GM12878 (cell line): ENCODE measurements at regions of chr12 and their contacts with region 1.

Region 1: GRCh38 chr12:53159195-53159839 is 21.2 kb upstream of the ZNF740 start:
- DNase-seq: peak; percentile 72
- ATAC-seq: peak; percentile 99
- H3K4me3 ChIP-seq: no peak overlapping the region
- H3K27ac ChIP-seq: no peak overlapping the region
- H3K4me1 ChIP-seq: no peaks in the 10 kb centered on the region; the same call in 1 of the 2 replicates
- H3K27me3 ChIP-seq: no peaks in the 10 kb centered on the region
- CTCF ChIP-seq: peak; percentile 97 to 100 (median 99)
- EP300 ChIP-seq: no peak
- POLR2A ChIP-seq: no peak
- RAD21 ChIP-seq: peak; percentile 99

Region 2: GRCh38 chr12:53180220-53180930 is 21.1 kb after region 1 on chr12 and contains the starts of genes CSAD and ZNF740:
- CTCF ChIA-PET with region 1: interaction called, 89 read pairs
- POLR2A ChIA-PET with region 1: interaction called, 26 read pairs
- RAD21 ChIA-PET with region 1: interaction called, 36 read pairs
- SMC1A ChIA-PET with region 1: interaction called, 39 read pairs
- in situ Hi-C with region 1: no loop called
- intact Hi-C with region 1: loop called (anchors 2 kb)
- DNase-seq: peak; percentile 91
- ATAC-seq: peak; percentile 96
- H3K4me3 ChIP-seq: peak within 1 kb of the TSS; percentile 78
- H3K27ac ChIP-seq: peak within 1 kb of the TSS; percentile 91
- H3K4me1 ChIP-seq: peaks cover 13% of the 10 kb centered on the region; the same call in 1 of the 2 replicates
- H3K27me3 ChIP-seq: no peaks in the 10 kb centered on the region
- CTCF ChIP-seq: peak in 2 of 3 experiments; percentile 2 to 12; a peak in 1 of 6 replicates
- EP300 ChIP-seq: no peak
- POLR2A ChIP-seq: peak; percentile 81
- RAD21 ChIP-seq: no peak
- polyA plus RNA-seq, gene CSAD: 1.2 to 2.0 TPM
- polyA plus RNA-seq, gene ZNF740: 1.4 to 1.8 TPM

Region 3: DNA sequence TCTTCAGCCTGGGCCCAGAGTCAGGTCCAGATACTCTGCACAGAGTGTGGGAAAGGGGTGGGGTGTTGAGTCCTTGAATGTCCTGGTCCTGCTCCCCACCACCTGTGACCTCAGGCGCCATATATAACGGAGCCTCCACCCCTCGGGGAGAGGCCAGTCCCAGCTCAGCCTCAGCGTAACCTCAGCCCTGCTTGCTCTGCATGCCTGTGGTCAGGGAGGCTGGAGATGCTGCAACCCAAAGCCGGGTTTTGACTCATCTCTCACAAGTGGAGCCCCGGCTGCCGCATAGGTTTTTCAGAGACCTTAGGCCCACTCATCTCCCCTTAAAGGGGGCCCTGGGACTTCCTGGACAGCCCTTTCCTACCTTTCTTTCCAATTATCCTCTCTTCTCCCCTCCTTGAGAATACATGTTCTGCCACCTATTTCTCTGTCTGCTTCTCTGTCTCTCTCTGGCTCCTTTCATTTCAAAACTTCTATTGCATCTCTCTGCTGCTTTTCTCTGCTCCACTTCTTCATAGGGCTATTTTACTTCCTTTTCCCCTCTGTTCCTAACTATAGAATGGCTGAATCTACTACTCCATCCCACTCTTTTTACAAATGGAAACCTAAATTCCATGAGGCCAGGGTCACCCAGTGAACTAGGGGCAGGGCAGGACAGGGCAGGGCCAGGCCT is 46.6 kb after region 1 on chr12:
- CTCF ChIA-PET with region 1: interaction called, 188 read pairs
- POLR2A ChIA-PET with region 1: interaction called, 7 read pairs
- RAD21 ChIA-PET with region 1: interaction called, 58 read pairs
- SMC1A ChIA-PET with region 1: interaction called, 62 read pairs
- in situ Hi-C with region 1: no loop called
- intact Hi-C with region 1: loop called (anchors 2 kb)
- DNase-seq: peak; percentile 87
- ATAC-seq: peak; percentile 80
- H3K4me3 ChIP-seq: peak overlapping the region; percentile 90
- H3K27ac ChIP-seq: peak overlapping the region; percentile 86
- H3K4me1 ChIP-seq: peaks cover 54% of the 10 kb centered on the region
- H3K27me3 ChIP-seq: no peaks in the 10 kb centered on the region
- CTCF ChIP-seq: no peak
- EP300 ChIP-seq: peak; percentile 60 to 77; a peak in 2 of 4 replicates
- POLR2A ChIP-seq: peak; percentile 75
- RAD21 ChIP-seq: no peak

Region 4: DNA sequence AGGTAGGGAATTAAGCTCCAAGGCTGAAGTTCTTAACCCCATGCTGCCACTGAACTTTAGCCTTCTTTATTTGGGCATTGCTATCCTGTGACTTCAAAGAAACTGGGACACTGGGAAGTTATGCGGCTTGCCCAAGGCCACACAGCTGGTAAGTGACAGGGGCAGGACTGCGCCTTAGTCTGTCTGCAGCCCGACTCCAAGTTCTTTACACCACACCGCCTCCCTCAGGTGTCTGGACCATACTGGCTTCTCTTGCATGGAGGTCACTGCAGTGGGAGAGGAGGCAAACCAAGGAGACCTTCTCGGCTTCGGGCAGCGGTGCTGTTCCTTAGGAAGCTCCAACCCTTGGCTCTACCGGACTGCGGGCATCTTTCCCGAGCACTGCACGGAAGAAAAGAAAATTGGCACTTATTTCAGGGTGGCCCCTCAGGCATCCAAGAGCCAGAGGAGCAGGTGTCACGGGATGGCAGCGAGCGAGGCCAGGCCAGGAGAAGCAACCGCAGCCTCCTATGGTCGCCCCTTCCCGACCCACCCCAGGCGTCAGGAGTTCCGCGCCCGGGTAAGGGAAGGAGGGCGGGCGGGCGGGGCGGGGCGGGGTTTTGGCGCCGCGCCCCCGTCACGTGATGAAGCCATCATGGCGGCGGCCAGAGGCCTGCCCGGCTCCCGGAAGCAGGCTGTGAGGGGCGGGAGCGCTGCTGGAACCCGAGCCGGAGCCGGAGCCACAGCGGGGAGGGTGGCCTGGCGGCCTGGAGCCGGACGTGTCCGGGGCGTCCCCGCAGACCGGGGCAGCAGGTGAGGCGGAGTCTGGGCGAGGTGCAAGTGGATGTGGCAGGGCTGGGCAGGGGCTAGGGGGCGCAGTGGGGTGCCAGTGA is 92.4 kb after region 1 on chr12:
- CTCF ChIA-PET with region 1: interaction called, 33 read pairs
- POLR2A ChIA-PET with region 1: no interaction called
- RAD21 ChIA-PET with region 1: interaction called, 18 read pairs
- SMC1A ChIA-PET with region 1: interaction called, 11 read pairs
- in situ Hi-C with region 1: no loop called
- intact Hi-C with region 1: no loop called
- DNase-seq: peak; percentile 24
- ATAC-seq: peak; percentile 92
- H3K4me3 ChIP-seq: peak overlapping the region; percentile 99
- H3K27ac ChIP-seq: peak overlapping the region; percentile 66
- H3K4me1 ChIP-seq: peaks cover 28% of the 10 kb centered on the region
- H3K27me3 ChIP-seq: no peaks in the 10 kb centered on the region
- CTCF ChIP-seq: peak; percentile 52 to 83 (median 64); a peak in 5 of 6 replicates
- EP300 ChIP-seq: no peak
- POLR2A ChIP-seq: peak; percentile 92
- RAD21 ChIP-seq: peak; percentile 83

Region 5: GRCh38 chr12:53287741-53288216 is 128.5 kb after region 1 on chr12:
- CTCF ChIA-PET with region 1: interaction called, 144 read pairs
- POLR2A ChIA-PET with region 1: interaction called, 3 read pairs
- RAD21 ChIA-PET with region 1: interaction called, 34 read pairs
- SMC1A ChIA-PET with region 1: interaction called, 35 read pairs
- in situ Hi-C with region 1: loop called (anchors 5 kb)
- intact Hi-C with region 1: loop called (anchors 1 kb)
- DNase-seq: peak; percentile 17
- ATAC-seq: peak; percentile 99
- H3K4me3 ChIP-seq: no peak overlapping the region
- H3K27ac ChIP-seq: no peak overlapping the region
- H3K4me1 ChIP-seq: no peaks in the 10 kb centered on the region
- H3K27me3 ChIP-seq: no peaks in the 10 kb centered on the region
- CTCF ChIP-seq: peak; percentile 76 to 80 (median 78)
- EP300 ChIP-seq: no peak
- POLR2A ChIP-seq: no peak
- RAD21 ChIP-seq: peak; percentile 84

Region 6: DNA sequence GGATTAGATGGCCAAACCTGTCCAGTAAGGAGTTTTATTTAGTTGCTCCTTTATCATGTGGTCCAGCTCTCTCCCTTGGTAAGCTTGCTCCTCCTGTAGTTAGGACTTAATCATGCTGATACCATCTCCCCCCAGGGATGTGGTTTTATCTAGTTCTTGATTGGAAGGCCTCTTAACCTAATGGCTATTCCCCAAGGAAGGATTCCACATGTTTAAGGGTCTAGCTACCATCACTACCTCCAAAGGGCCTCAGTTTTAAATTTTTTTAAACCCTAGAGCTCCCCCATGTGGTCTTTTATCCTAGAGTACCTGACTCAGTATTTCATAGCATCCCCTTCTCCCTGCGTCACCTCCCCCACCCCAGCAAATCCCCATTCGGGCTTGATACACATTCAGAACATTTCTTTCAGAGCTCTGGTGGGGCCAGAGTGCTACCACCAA is 317.5 kb after region 1 on chr12:
- CTCF ChIA-PET with region 1: no interaction called
- POLR2A ChIA-PET with region 1: no interaction called
- RAD21 ChIA-PET with region 1: no interaction called
- SMC1A ChIA-PET with region 1: no interaction called
- in situ Hi-C with region 1: no loop called
- intact Hi-C with region 1: no loop called
- DNase-seq: no peak
- ATAC-seq: peak; percentile 60
- H3K4me3 ChIP-seq: no peak overlapping the region
- H3K27ac ChIP-seq: no peak overlapping the region
- H3K4me1 ChIP-seq: 0 out of 2 replicates have a peak, but pooled peaks cover 2% of the 10 kb centered on the region
- H3K27me3 ChIP-seq: no peaks in the 10 kb centered on the region
- CTCF ChIP-seq: peak in 2 of 3 experiments; percentile 10 to 34; a peak in 2 of 6 replicates
- EP300 ChIP-seq: no peak
- POLR2A ChIP-seq: no peak
- RAD21 ChIP-seq: no peak